ENCODE measurements at regions of chr12 and their contacts with region 1.

Region 1: DNA sequence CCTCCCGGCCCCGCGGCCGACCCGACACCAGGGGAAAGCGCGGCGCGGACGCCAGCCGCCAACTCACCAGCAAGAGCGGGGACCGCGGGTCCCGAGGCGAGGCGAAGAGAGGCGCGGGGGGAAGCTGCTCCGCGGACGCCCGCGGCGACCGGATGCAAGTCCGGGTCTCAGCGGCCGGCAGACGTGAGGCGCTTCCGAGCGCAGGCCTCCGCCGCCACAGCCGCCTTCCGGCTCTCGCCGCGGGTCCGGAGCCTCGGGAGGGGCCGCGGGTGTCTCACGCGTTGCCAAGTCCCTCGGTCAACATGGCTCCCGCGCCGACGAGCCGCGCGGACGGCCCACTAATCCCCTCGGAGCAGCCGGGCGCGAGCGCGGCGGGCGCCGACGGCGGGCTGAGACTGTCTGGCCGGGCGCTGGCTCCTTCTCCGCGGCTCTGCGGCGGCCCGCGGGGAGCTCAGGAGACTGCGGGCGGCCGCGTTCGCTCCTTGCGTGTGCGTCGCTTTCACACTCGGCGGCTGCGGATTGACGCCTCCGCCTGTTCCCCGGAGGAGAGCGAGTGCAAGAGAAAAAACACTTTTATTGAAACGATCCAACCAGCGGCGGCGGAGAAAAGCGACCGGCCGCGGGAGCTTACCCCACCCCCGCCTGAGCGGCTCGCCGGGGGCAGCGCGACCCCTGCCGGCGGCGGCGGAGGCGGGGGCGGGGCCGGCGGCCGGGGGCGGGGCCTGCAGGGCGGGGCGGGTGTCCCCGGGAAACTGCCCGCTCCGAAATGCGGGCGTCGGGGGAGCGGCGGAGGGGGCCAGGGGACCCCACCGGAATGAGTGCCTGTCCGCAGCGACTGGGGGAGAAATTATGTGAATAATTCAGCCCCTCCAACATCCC is at the start of gene CDK17:
- DNase-seq: peak; percentile 83 to 92 (median 86)
- ATAC-seq: peak; percentile 65 to 93 (median 86)
- H3K4me3 ChIP-seq: peak within 1 kb of the TSS; percentile 59 to 98 (median 88)
- H3K27ac ChIP-seq: peak within 1 kb of the TSS; percentile 97 to 100 (median 99)
- H3K4me1 ChIP-seq: peaks cover 5 to 43% (median 25%) of the 10 kb centered on the region in 12 donors
- H3K27me3 ChIP-seq: no peaks in the 10 kb centered on the region
- CTCF ChIP-seq: peak; percentile 15 to 78 (median 56)
- POLR2A ChIP-seq: peak in 1 of 2 donors; percentile 64
- total RNA-seq, gene CDK17: 14.3 to 31.7 (median 23.1) TPM

Region 2: DNA sequence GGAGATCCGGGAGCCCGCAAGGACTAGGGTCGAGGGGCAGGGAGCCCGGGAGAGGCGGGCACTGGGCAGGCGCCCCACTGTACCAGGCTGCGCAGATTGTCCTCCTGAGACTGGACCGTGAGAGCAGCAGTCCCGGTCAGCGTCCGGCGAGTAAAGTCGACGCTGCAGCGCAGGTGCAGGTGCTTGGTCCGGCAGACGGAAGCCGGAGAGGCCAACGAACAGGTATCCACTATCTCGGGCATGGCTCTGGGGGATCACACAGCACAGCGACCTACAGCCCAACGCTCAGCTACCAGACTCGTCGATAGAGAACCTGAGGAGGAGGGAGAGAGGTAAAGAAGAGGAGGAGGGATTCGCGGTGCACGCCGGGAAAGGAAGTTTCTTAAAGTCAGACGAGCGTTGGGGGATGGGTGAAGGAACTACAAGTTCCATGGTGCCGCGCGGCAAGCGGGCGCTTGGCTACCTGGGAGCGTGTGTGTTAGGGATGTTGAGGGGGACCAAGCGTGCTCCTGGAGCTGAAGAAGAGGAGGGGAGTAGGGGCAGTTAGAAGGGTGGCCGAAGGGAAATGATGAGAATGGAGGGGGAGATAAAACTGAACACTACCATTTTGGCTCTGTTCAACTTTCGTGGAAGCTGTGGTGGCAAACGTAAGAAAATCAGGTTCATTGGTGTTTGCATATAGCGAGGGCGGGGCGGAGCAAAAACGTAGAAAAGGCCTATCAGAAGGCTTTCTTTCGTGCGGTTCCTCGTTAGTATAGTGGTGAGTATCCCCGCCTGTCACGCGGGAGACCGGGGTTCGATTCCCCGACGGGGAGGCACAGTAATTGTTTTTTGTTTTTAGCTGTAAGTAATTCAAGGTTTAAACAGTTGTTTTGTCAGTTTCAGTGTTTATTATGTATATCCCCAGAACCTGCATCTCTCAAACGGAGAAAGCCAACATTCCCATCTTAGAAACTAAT is 364.6 kb before region 1 on chr12 and contains the start of gene LTA4H:
- intact Hi-C with region 1: loop called in 1 of 10 experiments (anchors 10 kb)
- DNase-seq: peak; percentile 96 to 98 (median 97)
- ATAC-seq: peak; percentile 98 to 99 (median 98)
- H3K4me3 ChIP-seq: peak within 1 kb of the TSS; percentile 70 to 98 (median 89)
- H3K27ac ChIP-seq: peak within 1 kb of the TSS in 11 of 12 donors; percentile 59 to 92 (median 84)
- H3K4me1 ChIP-seq: peaks cover 0 to 33% (median 16%) of the 10 kb centered on the region in 12 donors
- H3K27me3 ChIP-seq: no peaks in the 10 kb centered on the region
- CTCF ChIP-seq: no peak
- POLR2A ChIP-seq: peak in 1 of 2 donors; percentile 81
- total RNA-seq, gene LTA4H: 32.8 to 72.0 (median 42.6) TPM

Region 3: DNA sequence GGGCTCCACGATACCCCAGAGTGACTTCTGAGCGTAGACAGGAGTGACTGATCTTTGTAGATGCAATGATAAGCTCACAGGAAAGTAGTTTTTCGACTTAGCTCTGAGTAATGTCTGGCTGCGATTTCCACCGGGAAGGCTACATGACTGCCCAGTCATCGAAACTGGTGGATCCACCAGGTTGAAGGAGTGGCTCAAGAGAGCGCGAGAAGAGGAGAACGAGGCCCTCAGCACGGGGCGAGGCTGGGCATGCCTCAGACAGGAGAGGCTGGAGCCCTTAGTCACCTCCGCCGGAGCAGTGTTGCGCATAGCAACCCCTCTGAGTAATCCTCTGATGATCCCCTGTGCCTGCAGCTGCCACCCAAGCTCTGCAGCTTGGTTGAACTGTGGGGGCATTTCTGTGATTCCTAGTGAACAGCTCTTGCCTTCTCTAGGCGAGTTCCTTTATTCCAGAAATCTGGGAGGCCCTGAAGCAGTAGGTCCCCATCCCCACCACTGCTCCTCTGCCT is 180.4 kb before region 1 on chr12:
- intact Hi-C with region 1: loop called in 7 of 10 experiments (anchors 5 to 10 kb)
- DNase-seq: no peak
- ATAC-seq: peak in 2 of 4 donors; percentile 26 to 37
- H3K4me3 ChIP-seq: no peak overlapping the region
- H3K27ac ChIP-seq: peak overlapping the region in 6 of 12 donors; percentile 18 to 47 (median 34)
- H3K4me1 ChIP-seq: peaks cover 0 to 87% (median 54%) of the 10 kb centered on the region in 12 donors
- H3K27me3 ChIP-seq: no peaks in the 10 kb centered on the region
- CTCF ChIP-seq: no peak
- POLR2A ChIP-seq: no peak

Region 4: DNA sequence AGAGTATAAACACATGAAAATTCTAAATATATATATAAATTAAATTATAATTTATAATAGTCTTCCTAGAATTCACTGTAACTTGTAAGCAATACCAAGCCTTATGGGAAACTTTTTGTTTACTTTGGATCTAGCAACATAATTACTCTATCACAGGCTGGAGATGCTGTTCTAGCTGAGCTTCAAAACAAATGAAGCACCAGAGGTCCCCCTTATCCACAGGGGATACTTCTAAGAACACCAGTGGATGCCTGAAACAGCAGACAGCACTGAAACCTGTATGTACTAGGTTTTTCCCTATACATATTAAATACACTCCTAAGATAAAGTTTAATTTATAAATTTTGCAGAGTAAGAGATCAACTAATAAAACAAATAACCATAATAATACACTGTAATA is 96.5 kb before region 1 on chr12:
- intact Hi-C with region 1: loop called in 6 of 10 experiments (anchors 2 to 10 kb)
- DNase-seq: no peak
- ATAC-seq: peak in 1 of 4 donors; percentile 64
- H3K4me3 ChIP-seq: no peak overlapping the region
- H3K27ac ChIP-seq: no peak overlapping the region
- H3K4me1 ChIP-seq: peaks cover 0 to 17% (median 0%) of the 10 kb centered on the region in 12 donors
- H3K27me3 ChIP-seq: no peaks in the 10 kb centered on the region
- CTCF ChIP-seq: peak in 3 of 12 donors; percentile 11 to 40 (median 23)
- POLR2A ChIP-seq: no peak

Region 5: DNA sequence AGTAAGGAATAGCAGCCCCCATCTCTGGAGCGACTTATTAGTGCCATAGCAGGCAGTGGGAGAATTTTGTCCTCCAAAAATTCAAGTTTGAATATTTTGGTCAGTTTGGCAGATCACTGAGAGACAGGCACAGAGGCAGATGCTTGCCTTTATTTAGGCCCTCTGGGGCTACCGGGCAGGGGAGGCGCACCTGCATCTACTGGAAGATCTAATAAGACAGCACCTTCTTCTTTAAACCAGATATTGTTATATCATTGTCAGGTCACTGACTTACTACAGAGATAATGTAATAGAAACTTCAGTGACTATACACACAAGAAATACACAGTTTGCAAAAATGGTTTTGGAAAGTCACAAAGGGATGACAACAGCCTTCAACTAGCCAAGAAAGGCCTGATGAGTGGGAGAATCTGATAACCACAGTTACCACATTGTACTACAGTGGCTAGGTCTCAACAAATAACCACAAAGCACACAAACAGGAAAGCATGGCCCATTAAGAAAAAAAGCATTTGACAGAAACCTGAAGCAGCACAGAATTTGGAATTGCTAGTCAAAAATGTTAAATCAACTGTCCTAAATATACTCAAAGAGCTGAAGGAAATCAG is 56.7 kb before region 1 on chr12:
- intact Hi-C with region 1: loop called in 2 of 10 experiments (anchors 10 kb)
- DNase-seq: no peak
- ATAC-seq: no peak
- H3K4me3 ChIP-seq: no peak overlapping the region
- H3K27ac ChIP-seq: no peak overlapping the region
- H3K4me1 ChIP-seq: peaks cover 0 to 37% (median 7%) of the 10 kb centered on the region in 12 donors
- H3K27me3 ChIP-seq: no peaks in the 10 kb centered on the region
- CTCF ChIP-seq: no peak
- POLR2A ChIP-seq: no peak

Region 6: GRCh38 chr12:96495841-96496545 is 95.8 kb after region 1 on chr12:
- intact Hi-C with region 1: loop called in 7 of 10 experiments (anchors 5 to 10 kb)
- DNase-seq: no peak
- ATAC-seq: no peak
- H3K4me3 ChIP-seq: no peak overlapping the region
- H3K27ac ChIP-seq: peak overlapping the region in 1 of 12 donors; percentile 7
- H3K4me1 ChIP-seq: peaks cover 0 to 15% (median 3%) of the 10 kb centered on the region in 12 donors
- H3K27me3 ChIP-seq: no peaks in the 10 kb centered on the region
- CTCF ChIP-seq: no peak
- POLR2A ChIP-seq: no peak